Heart left ventricle (tissue), 16 donors: ENCODE measurements at regions of chr3 and their contacts with region 1.

Region 1: GRCh38 chr3:177211503-177212277 is 14.4 kb upstream of the TBL1XR1 start:
- DNase-seq: no peak
- ATAC-seq: no peak
- H3K4me3 ChIP-seq: no peak overlapping the region
- H3K27ac ChIP-seq: no peak overlapping the region
- H3K4me1 ChIP-seq: no peaks in the 10 kb centered on the region
- H3K27me3 ChIP-seq: no peaks in the 10 kb centered on the region
- CTCF ChIP-seq: no peak
- POLR2A ChIP-seq: no peak

Region 2: GRCh38 chr3:177284383-177284881 is 72.7 kb after region 1 on chr3:
- intact Hi-C with region 1: loop called in 1 of 10 experiments (anchors 10 kb)
- DNase-seq: peak in 2 of 5 donors; percentile 16 to 52
- ATAC-seq: peak in 3 of 4 donors; percentile 49 to 77 (median 69)
- H3K4me3 ChIP-seq: no peak overlapping the region
- H3K27ac ChIP-seq: no peak overlapping the region
- H3K4me1 ChIP-seq: peaks cover 0 to 39% (median 6%) of the 10 kb centered on the region in 12 donors
- H3K27me3 ChIP-seq: no peaks in the 10 kb centered on the region
- CTCF ChIP-seq: peak in 2 of 12 donors; percentile 6 to 18
- POLR2A ChIP-seq: no peak

Region 3: DNA sequence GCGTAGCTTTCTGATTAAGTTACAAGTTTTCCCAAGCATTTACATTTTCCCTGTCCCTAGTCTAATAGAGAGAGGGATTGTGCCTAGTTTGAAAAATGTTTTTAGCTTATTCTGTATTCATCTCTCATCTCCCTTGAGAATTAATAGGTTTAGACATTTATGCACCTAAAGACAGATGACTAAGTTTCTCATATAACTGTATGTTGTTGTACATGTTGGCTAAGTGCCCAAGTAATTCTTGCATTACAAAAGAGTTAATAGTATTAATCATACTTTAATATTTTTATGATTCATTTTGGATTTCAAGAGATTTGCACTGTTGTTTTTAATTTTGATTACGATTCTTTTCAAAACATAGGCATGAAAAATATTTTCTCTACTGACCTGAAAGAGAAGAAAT is 94.6 kb after region 1 on chr3:
- intact Hi-C with region 1: no loop called
- DNase-seq: no peak
- ATAC-seq: no peak
- H3K4me3 ChIP-seq: no peak overlapping the region
- H3K27ac ChIP-seq: no peak overlapping the region
- H3K4me1 ChIP-seq: no peaks in the 10 kb centered on the region
- H3K27me3 ChIP-seq: no peaks in the 10 kb centered on the region
- CTCF ChIP-seq: no peak
- POLR2A ChIP-seq: no peak